Lower leg skin (tissue), 4 donors: ENCODE measurements at regions of chr14 and their contacts with region 1.

Region 1: GRCh38 chr14:90697577-90698206 is 118.5 kb downstream of the TTC7B start:
- DNase-seq: peak; percentile 77 to 96
- H3K4me3 ChIP-seq: no peak overlapping the region
- CTCF ChIP-seq: peak in 1 of 3 donors; percentile 83
- POLR2A ChIP-seq: no peak

Region 2: GRCh38 chr14:89096946-89097345 is 1600.7 kb before region 1 on chr14:
- intact Hi-C with region 1: loop called (anchors 5 kb)
- DNase-seq: no peak
- H3K4me3 ChIP-seq: no peak overlapping the region
- CTCF ChIP-seq: no peak
- POLR2A ChIP-seq: no peak

Region 3: DNA sequence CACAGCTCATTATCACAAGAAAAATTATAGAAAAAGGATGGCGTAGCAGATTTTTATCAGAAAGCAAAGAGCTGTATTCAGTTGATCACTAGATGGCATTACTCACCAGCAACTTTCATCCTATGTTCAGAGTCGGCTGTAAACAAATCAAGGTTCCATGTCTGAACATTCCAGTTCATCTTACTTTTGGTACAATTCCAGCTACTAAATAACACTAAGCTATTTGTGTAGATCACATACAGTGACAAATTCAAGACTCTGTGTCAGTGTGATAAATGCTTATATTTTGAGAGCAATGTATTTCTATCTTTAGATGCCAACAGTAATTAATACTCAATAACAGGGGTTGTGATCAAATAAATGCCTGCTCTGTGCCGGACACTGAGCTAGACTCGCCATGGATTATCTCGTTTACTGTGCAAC is 396.0 kb before region 1 on chr14:
- intact Hi-C with region 1: loop called (anchors 10 kb)
- DNase-seq: no peak
- H3K4me3 ChIP-seq: no peak overlapping the region
- CTCF ChIP-seq: no peak
- POLR2A ChIP-seq: no peak

Region 4: DNA sequence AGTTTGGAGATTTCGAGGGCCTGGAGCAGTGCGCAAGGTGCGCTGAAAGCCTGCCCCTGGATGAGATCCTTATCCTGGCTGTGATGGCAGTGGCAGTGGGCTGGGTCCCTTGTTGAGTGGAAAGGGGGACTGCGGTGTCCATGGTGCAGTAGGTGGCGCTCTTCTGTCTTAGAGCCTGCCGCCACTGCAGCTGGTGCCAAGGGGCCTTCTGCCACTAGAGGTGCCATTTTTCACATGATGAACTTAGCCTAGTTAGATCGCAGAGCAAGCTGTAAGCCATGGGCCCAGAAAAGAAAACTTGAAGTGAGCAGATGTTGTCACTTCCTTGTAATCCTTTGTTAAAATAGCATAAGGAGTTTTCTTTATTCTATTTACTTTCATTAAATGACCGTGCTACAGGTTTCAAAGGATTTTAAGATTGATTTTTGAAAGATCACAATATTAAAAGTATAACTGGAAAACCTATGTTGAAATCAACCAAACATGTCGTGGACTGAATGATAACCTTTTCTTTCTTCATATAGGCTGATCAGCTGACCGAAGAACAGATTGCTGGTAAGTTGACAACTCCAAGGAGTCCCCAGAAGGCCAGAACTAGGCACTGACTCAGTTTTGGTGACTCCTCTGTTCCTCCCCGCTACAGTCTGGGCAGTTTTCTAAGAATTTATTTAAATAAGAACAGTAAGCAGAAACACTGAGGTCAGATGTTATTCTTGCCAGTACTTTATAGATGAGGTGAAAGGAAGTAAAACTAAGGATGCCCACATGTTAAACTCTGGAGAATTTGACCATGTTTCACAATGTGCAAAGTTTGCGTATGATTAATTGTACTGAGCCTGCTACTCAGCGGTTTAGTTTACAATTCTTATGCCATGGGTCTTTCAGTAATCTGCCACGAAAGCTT is 297.9 kb before region 1 on chr14:
- intact Hi-C with region 1: loop called (anchors 10 kb)
- DNase-seq: peak; percentile 91 to 97
- H3K4me3 ChIP-seq: no peak overlapping the region
- CTCF ChIP-seq: peak in 1 of 3 donors; percentile 91
- POLR2A ChIP-seq: no peak

Region 5: GRCh38 chr14:90894241-90894640 is 196.5 kb after region 1 on chr14:
- intact Hi-C with region 1: no loop called
- DNase-seq: no peak
- H3K4me3 ChIP-seq: no peak overlapping the region
- CTCF ChIP-seq: no peak
- POLR2A ChIP-seq: no peak